ENCODE measurements at regions of chr1 and their contacts with region 1.

Region 1: DNA sequence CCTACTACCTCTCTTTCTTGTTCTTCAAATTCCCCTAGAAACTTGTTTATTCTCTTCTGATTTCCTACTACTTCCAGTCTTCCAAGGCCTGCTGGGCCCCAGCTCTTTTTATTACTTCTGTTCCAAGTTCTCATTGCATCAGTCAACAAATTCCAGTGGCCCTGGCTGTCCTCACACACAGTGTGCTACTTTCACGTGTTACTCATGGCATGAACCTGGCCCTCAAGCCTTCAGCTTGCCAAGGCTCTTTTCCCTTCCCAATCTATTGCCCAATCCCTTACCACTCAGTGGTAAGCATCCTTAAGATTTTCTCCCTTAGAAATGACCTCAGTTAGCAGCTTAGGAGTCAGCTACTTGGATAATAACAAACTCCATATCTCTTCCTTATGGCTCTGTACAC is 613.5 kb downstream of the LMO4 start:
- DNase-seq: no peak

Region 2: DNA sequence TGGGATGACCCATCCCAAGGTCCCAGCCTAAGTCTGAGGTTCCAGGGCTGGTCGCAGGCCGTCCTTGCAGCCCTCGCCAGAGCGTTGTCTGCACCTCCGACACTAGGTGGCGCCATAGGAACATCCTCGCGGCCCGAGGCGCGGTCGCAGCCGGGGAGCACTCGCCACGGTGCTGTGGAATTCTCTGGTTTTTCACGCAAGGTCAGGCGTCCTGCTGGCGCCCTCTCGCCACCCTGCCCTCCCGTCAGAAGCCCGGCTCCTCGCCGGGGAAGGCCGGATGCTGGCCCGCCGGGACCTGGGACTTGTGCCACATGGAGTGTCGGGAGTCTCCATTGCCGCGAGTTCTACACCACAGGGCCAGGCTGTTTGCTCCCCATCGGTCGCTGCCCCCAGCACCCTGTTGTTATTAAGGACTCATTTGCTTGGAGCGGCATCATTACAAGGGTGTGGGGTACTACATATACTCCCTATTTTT is 810.3 kb before region 1 on chr1:
- in situ Hi-C with region 1: loop called (anchors 25 kb)
- DNase-seq: peak; percentile 74

Region 3: GRCh38 chr1:88252745-88253144 is 310.6 kb after region 1 on chr1:
- in situ Hi-C with region 1: no loop called
- DNase-seq: no peak

Measured in KBM-7 (cell line).